RWPE1 (cell line): ENCODE measurements at regions of chr7 and their contacts with region 1.

Region 1: GRCh38 chr7:28926871-28927597 is 31.1 kb downstream of the TRIL start:
- DNase-seq: peak; percentile 82
- H3K27ac ChIP-seq: no peak overlapping the region
- CTCF ChIP-seq: peak; percentile 88

Region 2: GRCh38 chr7:28939844-28940544 is 13.0 kb after region 1 on chr7:
- CTCF ChIA-PET with region 1: interaction called, 15 read pairs
- POLR2A ChIA-PET with region 1: no interaction called
- DNase-seq: no peak
- H3K27ac ChIP-seq: no peak overlapping the region
- CTCF ChIP-seq: no peak

Region 3: DNA sequence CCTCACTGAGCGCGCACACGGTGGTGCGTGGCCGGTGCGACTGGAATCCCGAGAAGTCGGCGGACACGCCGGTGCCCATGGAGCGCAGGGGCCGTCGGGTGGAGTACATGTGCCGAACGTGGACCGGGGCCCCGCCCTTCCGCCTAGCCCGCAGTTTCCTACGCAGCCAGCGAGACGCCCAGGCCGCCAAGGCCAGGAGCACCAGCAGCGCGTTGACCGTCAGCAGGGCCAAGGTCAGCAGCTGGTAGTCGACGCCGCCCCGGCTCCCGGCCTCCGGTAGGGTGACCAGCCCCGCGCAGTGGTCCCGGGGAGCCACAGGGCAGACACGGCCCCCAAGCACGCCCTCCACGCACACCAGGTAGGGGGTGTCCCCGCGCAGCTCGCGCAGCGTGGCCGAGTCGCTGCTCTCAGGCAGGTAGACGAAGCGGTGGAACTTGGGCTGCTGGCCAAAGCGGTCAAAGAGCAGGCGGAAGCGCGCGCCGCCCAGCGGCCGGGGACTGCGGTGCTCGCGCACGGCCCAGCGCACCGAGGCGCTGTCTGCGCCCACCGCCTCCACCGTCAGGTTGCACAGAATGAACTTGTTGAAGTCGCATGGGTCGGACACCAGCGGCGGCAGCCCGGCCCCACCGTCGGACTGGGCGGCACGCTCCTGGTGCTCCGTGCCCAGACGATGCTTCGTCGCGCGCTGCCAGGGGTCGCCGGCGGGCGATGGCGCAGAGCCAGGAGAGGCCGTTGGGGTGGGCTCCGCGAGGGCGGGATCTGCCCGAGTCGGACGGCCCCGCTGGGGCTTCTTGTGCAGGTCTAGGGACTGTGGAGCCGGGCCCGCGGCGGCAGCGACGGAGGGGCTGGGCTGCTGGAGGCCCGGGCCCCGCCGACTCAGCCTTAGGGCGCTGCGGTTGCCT is 28.9 kb after region 1 on chr7:
- CTCF ChIA-PET with region 1: interaction called, 30 read pairs
- POLR2A ChIA-PET with region 1: no interaction called
- DNase-seq: peak; percentile 63
- H3K27ac ChIP-seq: no peak overlapping the region
- CTCF ChIP-seq: peak; percentile 38; the same call in 1 of the 2 replicates

Region 4: DNA sequence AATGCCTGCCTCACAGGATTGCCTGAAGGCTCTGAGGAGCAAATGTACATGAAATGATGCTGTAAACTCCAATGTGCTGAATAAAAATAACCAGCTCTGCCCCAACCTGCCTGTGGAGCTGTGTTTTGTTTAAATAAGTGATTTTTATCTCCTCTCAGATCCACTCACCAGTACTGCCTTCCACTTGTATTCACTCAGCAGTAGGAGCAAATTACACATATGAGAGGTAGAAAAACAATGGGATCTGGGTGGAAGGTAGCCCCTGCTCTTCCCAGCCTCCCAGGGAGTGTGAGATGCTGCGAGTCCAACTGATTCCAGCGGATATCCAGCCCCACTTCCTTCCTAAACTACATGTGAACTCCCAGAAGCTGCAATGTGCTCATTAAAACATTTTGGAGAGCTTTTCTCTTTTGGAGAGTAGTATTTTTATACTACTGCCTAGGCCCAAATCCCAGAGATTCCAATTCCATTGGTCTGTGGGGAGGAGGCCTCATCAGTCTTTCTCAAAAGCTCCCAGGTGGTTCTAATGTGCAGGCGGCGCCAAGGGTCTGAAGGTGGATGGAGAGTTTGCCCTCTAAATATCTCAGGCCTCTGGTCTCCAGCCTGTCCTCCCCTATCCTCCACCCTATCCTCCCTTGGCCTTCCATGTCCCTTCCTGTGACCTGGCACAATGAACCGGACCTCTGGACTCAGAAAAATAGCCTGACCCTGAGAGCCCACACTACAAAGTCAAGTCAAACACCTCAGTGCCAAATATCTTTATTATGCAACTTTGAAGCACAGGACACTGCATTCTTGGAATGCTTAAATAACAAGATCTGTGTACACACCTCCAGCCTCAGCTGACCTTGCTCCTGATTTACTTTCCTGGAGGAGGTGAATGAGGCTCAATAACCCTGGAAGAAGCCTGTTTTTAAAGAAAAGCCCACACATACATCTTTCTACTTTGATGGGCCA is 173.1 kb after region 1 on chr7:
- CTCF ChIA-PET with region 1: interaction called, 19 read pairs
- POLR2A ChIA-PET with region 1: no interaction called
- DNase-seq: no peak
- H3K27ac ChIP-seq: no peak overlapping the region
- CTCF ChIP-seq: no peak

Region 5: DNA sequence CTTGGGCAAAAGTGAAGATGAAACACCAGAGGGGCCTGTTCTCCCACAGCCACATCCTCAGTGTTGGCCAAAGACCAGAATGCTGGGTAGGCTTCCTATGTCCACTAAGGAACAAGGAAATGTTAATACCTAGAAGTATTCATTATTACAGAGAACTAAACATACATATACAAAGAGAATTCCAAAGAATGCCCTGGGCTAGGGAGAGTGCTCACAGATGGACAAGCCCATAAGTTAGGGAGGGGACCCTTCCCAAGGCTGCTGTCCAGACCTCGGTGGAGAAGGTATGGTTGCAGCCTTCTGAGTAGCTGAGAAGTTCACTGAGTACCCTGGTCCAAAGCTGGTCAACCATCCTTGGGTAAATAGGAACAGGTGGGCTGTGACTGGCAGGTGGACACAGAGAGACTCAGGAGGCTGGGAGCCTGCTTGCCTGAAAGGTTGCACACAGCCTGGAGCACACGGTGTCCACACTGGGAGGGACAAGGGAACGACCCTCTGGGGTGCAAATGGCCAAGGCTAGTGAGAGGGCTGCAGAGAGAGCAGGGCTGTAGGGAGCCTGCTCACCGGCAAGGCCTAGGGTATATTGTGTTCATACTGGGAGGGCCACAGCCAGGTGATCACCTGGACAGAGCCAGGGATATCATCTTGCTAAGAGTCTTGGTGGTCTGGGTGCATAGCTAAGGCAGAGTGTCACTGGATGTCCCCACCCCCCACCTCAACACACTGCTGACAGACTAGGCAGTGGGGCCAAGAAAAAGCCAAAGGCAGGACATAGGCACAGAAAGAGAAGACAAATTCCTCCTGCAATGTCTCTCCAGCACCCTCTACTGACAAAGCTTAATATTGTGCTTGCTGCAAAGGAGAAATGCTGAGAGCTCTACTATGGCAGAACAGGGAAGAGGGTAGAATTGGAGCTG is 179.0 kb after region 1 on chr7:
- CTCF ChIA-PET with region 1: interaction called, 33 read pairs
- POLR2A ChIA-PET with region 1: interaction called, 4 read pairs
- DNase-seq: no peak
- H3K27ac ChIP-seq: no peak overlapping the region
- CTCF ChIP-seq: peak; percentile 95

Region 6: GRCh38 chr7:29408841-29409243 is 481.8 kb after region 1 on chr7:
- CTCF ChIA-PET with region 1: interaction called, 46 read pairs
- POLR2A ChIA-PET with region 1: no interaction called
- DNase-seq: peak; percentile 79
- H3K27ac ChIP-seq: no peak overlapping the region
- CTCF ChIP-seq: peak; percentile 77